PC-3 (cell line): ENCODE measurements at regions of chr13 and their contacts with region 1.

Region 1: GRCh38 chr13:100987953-100988352 is 313.4 kb upstream of the TMTC4 start:
- DNase-seq: peak; percentile 27
- ATAC-seq: peak; percentile 64
- H3K4me3 ChIP-seq: no peak overlapping the region
- H3K27ac ChIP-seq: no peak overlapping the region
- H3K4me1 ChIP-seq: no peaks in the 10 kb centered on the region
- H3K27me3 ChIP-seq: peaks cover 22% of the 10 kb centered on the region
- CTCF ChIP-seq: peak; percentile 37; the same call in 1 of the 2 replicates

Region 2: GRCh38 chr13:100573121-100573520 is 414.8 kb before region 1 on chr13:
- CTCF ChIA-PET with region 1: no interaction called
- POLR2A ChIA-PET with region 1: no interaction called
- intact Hi-C with region 1: loop called (anchors 10 kb)
- DNase-seq: peak; percentile 76
- ATAC-seq: peak; percentile 92
- H3K4me3 ChIP-seq: no peak overlapping the region
- H3K27ac ChIP-seq: no peak overlapping the region
- H3K4me1 ChIP-seq: no peaks in the 10 kb centered on the region
- H3K27me3 ChIP-seq: no peaks in the 10 kb centered on the region
- CTCF ChIP-seq: peak; percentile 80

Region 3: GRCh38 chr13:100721885-100722512 is 266.0 kb before region 1 on chr13:
- CTCF ChIA-PET with region 1: no interaction called
- POLR2A ChIA-PET with region 1: no interaction called
- intact Hi-C with region 1: loop called (anchors 2 kb)
- DNase-seq: peak; percentile 63
- ATAC-seq: peak; percentile 74
- H3K4me3 ChIP-seq: no peak overlapping the region
- H3K27ac ChIP-seq: no peak overlapping the region
- H3K4me1 ChIP-seq: no peaks in the 10 kb centered on the region; the same call in 1 of the 2 replicates
- H3K27me3 ChIP-seq: no peaks in the 10 kb centered on the region
- CTCF ChIP-seq: peak; percentile 69